ENCODE measurements at regions of chr2 and their contacts with region 1.

Region 1: GRCh38 chr2:60353406-60353800 is 200.1 kb downstream of the BCL11A start:
- DNase-seq: no peak
- ATAC-seq: peak; percentile 1
- H3K4me3 ChIP-seq: peak overlapping the region in 2 of 5 experiments; percentile 8 to 10
- H3K4me3 Mint-ChIP-seq: peak overlapping the region; percentile 54
- H3K27ac ChIP-seq: peak overlapping the region; percentile 95
- H3K27ac Mint-ChIP-seq: peak overlapping the region; percentile 99
- H3K4me1 ChIP-seq: peaks cover 98% of the 10 kb centered on the region in 2 donors
- H3K4me1 Mint-ChIP-seq: peaks cover 98% of the 10 kb centered on the region
- H3K27me3 ChIP-seq: no peaks in the 10 kb centered on the region
- H3K27me3 Mint-ChIP-seq: no peaks in the 10 kb centered on the region
- CTCF ChIP-seq: no peak

Region 2: GRCh38 chr2:60317844-60318243 is 35.6 kb before region 1 on chr2:
- CTCF ChIA-PET with region 1: interaction called, 7 read pairs
- POLR2A ChIA-PET with region 1: interaction called, 5 read pairs
- intact Hi-C with region 1: loop called (anchors 2 kb)
- DNase-seq: peak; percentile 87
- ATAC-seq: peak; percentile 83
- H3K4me3 ChIP-seq: peak overlapping the region in 1 of 5 experiments; percentile 28
- H3K4me3 Mint-ChIP-seq: peak overlapping the region; percentile 46
- H3K27ac ChIP-seq: peak overlapping the region; percentile 56 to 75
- H3K27ac Mint-ChIP-seq: peak overlapping the region; percentile 73
- H3K4me1 ChIP-seq: peaks cover 73 to 74% of the 10 kb centered on the region in 2 donors
- H3K4me1 Mint-ChIP-seq: peaks cover 86% of the 10 kb centered on the region
- H3K27me3 ChIP-seq: no peaks in the 10 kb centered on the region
- H3K27me3 Mint-ChIP-seq: no peaks in the 10 kb centered on the region
- CTCF ChIP-seq: no peak

Region 3: DNA sequence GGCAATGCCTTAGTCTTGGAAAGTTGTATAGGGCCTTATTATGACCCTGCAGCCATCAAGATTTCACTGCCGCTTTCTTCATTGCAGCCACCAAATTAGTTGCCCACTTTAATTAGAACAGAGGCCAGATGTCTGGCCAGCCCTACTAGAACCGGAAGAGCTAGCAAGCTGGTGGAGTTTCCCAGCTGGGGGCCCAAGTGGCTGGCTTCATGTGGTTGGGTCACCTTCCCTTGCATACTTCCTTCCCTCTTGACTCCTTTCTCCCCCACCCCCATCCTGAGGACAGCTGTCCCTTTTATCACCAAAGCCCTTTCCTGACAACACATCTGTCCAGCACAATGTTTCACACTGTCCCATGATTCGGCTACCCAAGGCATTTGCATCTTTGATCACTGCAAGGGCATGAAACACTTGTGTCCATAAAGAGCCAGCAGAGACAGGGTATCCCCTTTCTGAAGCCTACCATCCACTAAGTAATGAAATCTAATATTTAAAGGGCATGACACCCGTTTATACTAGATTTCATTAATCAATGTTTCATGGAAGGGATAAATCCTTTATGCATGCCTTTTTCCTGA is 12.8 kb after region 1 on chr2:
- CTCF ChIA-PET with region 1: interaction called, 33 read pairs
- POLR2A ChIA-PET with region 1: interaction called, 6 read pairs
- intact Hi-C with region 1: loop called (anchors 2 kb)
- DNase-seq: peak; percentile 60
- ATAC-seq: peak; percentile 50
- H3K4me3 ChIP-seq: peak overlapping the region in 1 of 5 experiments; percentile 41
- H3K4me3 Mint-ChIP-seq: peak overlapping the region; percentile 53
- H3K27ac ChIP-seq: peak overlapping the region; percentile 60 to 81
- H3K27ac Mint-ChIP-seq: peak overlapping the region; percentile 89
- H3K4me1 ChIP-seq: peaks cover 92 to 96% of the 10 kb centered on the region in 2 donors
- H3K4me1 Mint-ChIP-seq: peaks cover 96% of the 10 kb centered on the region
- H3K27me3 ChIP-seq: no peaks in the 10 kb centered on the region
- H3K27me3 Mint-ChIP-seq: no peaks in the 10 kb centered on the region
- CTCF ChIP-seq: no peak

Region 4: GRCh38 chr2:60391649-60392375 is 38.4 kb after region 1 on chr2:
- CTCF ChIA-PET with region 1: interaction called, 5 read pairs
- POLR2A ChIA-PET with region 1: interaction called, 4 read pairs
- intact Hi-C with region 1: loop called (anchors 1 kb)
- DNase-seq: no peak
- ATAC-seq: peak; percentile 9
- H3K4me3 ChIP-seq: no peak overlapping the region
- H3K4me3 Mint-ChIP-seq: peak overlapping the region; percentile 81
- H3K27ac ChIP-seq: peak overlapping the region; percentile 53 to 72
- H3K27ac Mint-ChIP-seq: peak overlapping the region; percentile 88
- H3K4me1 ChIP-seq: peaks cover 36 to 42% of the 10 kb centered on the region in 2 donors
- H3K4me1 Mint-ChIP-seq: peaks cover 71% of the 10 kb centered on the region
- H3K27me3 ChIP-seq: no peaks in the 10 kb centered on the region
- H3K27me3 Mint-ChIP-seq: no peaks in the 10 kb centered on the region
- CTCF ChIP-seq: no peak

Region 5: DNA sequence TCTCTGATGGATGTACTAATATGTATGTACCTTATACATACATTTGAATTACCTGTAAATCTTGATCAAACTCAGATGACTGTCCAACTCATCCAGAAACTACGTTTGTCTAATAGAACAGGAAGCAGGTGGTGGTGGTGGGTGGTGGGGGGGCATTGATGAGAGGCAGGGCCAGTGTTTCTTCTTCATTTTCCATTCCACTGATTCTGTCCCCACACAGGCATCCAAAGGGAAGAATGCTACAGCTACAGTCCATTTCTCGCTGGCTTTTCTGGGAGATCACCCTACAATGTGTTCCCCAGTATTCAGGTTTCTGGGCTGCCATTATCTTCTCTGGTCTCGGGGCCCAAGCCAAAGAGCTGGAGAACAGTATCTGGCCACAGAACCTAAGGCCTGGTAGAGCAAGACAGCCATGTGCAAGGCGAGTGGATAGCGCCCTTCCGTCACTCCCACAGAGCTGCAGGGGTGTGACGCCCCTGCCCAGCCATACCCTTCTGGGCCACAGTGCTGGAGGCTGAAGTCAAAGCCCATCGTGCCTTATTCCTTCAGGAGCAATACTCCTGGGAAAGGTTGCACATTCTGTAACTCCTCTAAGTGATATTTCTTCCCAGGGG is 145.5 kb after region 1 on chr2:
- CTCF ChIA-PET with region 1: interaction called, 8 read pairs
- POLR2A ChIA-PET with region 1: no interaction called
- intact Hi-C with region 1: loop called (anchors 5 kb)
- DNase-seq: peak; percentile 77
- ATAC-seq: peak; percentile 68
- H3K4me3 ChIP-seq: peak overlapping the region in 1 of 5 experiments; percentile 22
- H3K4me3 Mint-ChIP-seq: peak overlapping the region; percentile 74
- H3K27ac ChIP-seq: peak overlapping the region; percentile 80 to 93
- H3K27ac Mint-ChIP-seq: peak overlapping the region; percentile 88
- H3K4me1 ChIP-seq: peaks cover 99% of the 10 kb centered on the region in 2 donors
- H3K4me1 Mint-ChIP-seq: peaks cover 96% of the 10 kb centered on the region
- H3K27me3 ChIP-seq: no peaks in the 10 kb centered on the region
- H3K27me3 Mint-ChIP-seq: no peaks in the 10 kb centered on the region
- CTCF ChIP-seq: no peak